Breast epithelium (tissue), 4 donors: ENCODE measurements at regions of chr1 and their contacts with region 1.

Region 1: DNA sequence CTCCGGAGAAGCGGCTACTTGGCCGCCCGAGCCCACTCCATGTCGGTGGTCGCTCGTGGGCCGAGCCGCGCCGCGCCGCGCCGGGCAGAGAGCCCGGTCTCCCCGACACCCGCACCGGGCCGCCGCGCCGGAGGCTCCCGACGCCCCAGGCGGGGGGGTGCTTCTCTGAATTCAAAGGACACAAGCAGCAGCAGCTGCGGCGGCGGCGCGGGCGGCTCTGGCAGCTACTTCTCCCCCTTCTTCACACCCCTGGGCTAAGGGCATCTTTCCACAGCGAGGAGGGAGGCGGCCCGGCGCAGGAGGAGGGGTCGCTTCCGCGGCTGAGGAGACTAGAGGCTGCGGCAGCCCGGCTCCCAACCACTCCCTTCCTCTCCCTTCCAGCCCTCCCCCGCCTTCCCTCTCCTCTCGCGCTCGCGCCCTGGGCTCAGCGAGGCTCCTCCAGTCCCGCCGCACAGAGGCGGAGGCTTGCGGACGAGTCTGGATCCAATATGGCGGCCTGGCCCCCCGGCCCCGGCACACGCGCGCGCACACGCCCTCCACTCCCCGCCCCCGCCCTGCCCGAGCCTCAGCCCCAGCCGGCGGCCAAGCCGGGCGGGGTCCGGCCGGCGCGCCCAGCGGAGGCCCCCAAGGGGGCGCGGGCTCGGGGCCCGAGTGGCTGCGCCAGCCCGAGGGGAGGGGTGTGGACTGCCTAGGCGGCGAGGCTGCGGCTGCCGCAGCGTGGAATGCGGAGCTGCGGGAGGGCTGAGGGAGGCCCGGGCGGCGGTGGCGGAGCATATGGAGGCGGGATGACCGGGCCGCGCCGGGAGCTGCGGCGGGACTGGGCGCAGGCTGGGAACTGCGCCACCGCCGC is at the start of gene CDC42BPA:
- DNase-seq: peak; percentile 79 to 83
- H3K4me3 ChIP-seq: peak within 1 kb of the TSS; percentile 72 to 97 (median 93)
- H3K27ac ChIP-seq: peak within 1 kb of the TSS; percentile 88 to 99
- H3K4me1 ChIP-seq: no peaks in the 10 kb centered on the region
- H3K27me3 ChIP-seq: no peaks in the 10 kb centered on the region
- CTCF ChIP-seq: no peak
- POLR2A ChIP-seq: no peak
- total RNA-seq, gene CDC42BPA: 39.8 to 54.7 (median 46.7) TPM

Region 2: DNA sequence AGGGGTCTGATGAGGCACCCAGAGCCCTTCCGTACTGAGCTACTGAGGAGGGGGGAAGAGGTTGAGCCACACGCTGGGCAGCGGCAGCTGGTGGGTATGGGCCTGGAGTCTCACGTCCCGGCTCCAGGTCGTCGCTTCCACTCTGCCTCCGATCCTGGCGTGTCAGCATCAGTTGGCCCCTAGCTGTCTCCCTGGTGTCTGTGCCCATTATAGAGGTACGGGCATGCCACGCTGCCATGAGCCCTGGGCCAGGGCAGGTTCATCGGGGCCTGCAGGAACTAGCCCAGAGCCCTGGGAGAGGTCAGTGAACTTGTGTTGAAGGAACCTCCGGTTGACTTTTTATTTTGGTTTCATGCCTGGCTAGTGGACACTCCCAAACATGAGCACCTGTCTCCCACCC is 359.9 kb before region 1 on chr1:
- intact Hi-C with region 1: loop called (anchors 5 kb)
- DNase-seq: no peak
- H3K4me3 ChIP-seq: no peak overlapping the region
- H3K27ac ChIP-seq: no peak overlapping the region
- H3K4me1 ChIP-seq: no peaks in the 10 kb centered on the region
- H3K27me3 ChIP-seq: no peaks in the 10 kb centered on the region
- CTCF ChIP-seq: no peak
- POLR2A ChIP-seq: no peak

Region 3: GRCh38 chr1:227152525-227152924 is 165.7 kb before region 1 on chr1:
- intact Hi-C with region 1: no loop called
- DNase-seq: no peak
- H3K4me3 ChIP-seq: no peak overlapping the region
- H3K27ac ChIP-seq: no peak overlapping the region
- H3K4me1 ChIP-seq: no peaks in the 10 kb centered on the region
- H3K27me3 ChIP-seq: no peaks in the 10 kb centered on the region
- CTCF ChIP-seq: no peak
- POLR2A ChIP-seq: no peak

Region 4: GRCh38 chr1:227546059-227546458 is 227.8 kb after region 1 on chr1:
- intact Hi-C with region 1: loop called (anchors 5 kb)
- DNase-seq: no peak
- H3K4me3 ChIP-seq: no peak overlapping the region
- H3K27ac ChIP-seq: no peak overlapping the region
- H3K4me1 ChIP-seq: peaks cover 0 to 4% of the 10 kb centered on the region in 2 donors
- H3K27me3 ChIP-seq: no peaks in the 10 kb centered on the region
- CTCF ChIP-seq: no peak
- POLR2A ChIP-seq: no peak